T-cell (primary cell): ENCODE measurements at regions of chr19 and their contacts with region 1.

Region 1: DNA sequence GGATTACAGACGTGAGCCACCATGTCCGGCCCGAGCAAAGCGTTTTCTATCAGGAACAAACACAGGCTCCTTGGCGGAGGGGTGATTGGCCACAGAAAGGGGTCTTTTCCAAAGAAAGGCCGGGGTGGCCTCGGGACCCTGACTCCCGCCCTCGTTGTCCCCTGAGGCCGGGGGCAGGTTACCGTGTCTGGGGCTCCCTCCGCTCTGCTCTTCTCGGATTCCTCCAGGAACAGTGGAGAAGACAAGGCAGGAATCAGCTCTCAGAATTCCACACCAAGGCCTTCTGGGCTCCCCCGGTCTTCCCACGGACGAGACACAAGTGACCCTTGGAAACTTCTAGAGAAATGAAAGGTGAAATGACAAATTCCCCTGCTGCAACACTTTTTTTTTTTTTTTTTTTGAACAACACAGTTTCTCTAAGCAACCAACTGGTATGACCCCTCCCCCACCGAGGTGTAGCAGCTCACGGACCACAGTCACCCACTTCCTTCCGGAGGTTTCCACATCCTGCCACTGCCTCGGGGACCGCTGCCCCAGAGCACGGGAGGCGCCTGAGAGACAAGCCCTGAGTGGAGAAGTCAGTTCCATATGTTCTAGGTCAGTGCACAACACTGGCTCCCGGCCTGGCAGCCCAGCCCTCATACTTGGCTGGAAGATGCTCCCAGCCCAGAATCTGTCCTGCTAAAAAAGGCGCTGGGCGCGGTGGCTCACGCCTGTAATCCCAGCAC is 11.0 kb downstream of the MOB3A start:
- DNase-seq: peak; percentile 76 to 98 (median 94)
- ATAC-seq: peak; percentile 70 to 80 (median 76)
- H3K4me3 ChIP-seq: peak overlapping the region; percentile 92 to 99
- H3K4me3 Mint-ChIP-seq: peak overlapping the region; percentile 98 to 99 (median 99)
- H3K27ac ChIP-seq: peak overlapping the region; percentile 97
- H3K27ac Mint-ChIP-seq: peak overlapping the region; percentile 99
- H3K4me1 ChIP-seq: peaks cover 39 to 90% of the 10 kb centered on the region in 2 experiments
- H3K4me1 Mint-ChIP-seq: peaks cover 76 to 80% (median 76%) of the 10 kb centered on the region in 3 donors
- H3K27me3 ChIP-seq: no peaks in the 10 kb centered on the region
- H3K27me3 Mint-ChIP-seq: no peaks in the 10 kb centered on the region

Region 2: GRCh38 chr19:2070436-2070827 is 14.7 kb before region 1 on chr19:
- CTCF ChIA-PET with region 1: interaction called in 1 of 2 experiments, 4 read pairs
- POLR2A ChIA-PET with region 1: interaction called in 1 of 2 experiments, 12 read pairs
- DNase-seq: no peak
- ATAC-seq: peak in 1 of 4 experiments; percentile 4
- H3K4me3 ChIP-seq: no peak overlapping the region
- H3K4me3 Mint-ChIP-seq: no peak overlapping the region
- H3K27ac ChIP-seq: no peak overlapping the region
- H3K27ac Mint-ChIP-seq: peak overlapping the region in 1 of 2 donors; percentile 28
- H3K4me1 ChIP-seq: peaks cover 0 to 37% of the 10 kb centered on the region in 2 experiments
- H3K4me1 Mint-ChIP-seq: peaks cover 23 to 43% (median 33%) of the 10 kb centered on the region in 3 donors
- H3K27me3 ChIP-seq: no peaks in the 10 kb centered on the region
- H3K27me3 Mint-ChIP-seq: no peaks in the 10 kb centered on the region

Region 3: DNA sequence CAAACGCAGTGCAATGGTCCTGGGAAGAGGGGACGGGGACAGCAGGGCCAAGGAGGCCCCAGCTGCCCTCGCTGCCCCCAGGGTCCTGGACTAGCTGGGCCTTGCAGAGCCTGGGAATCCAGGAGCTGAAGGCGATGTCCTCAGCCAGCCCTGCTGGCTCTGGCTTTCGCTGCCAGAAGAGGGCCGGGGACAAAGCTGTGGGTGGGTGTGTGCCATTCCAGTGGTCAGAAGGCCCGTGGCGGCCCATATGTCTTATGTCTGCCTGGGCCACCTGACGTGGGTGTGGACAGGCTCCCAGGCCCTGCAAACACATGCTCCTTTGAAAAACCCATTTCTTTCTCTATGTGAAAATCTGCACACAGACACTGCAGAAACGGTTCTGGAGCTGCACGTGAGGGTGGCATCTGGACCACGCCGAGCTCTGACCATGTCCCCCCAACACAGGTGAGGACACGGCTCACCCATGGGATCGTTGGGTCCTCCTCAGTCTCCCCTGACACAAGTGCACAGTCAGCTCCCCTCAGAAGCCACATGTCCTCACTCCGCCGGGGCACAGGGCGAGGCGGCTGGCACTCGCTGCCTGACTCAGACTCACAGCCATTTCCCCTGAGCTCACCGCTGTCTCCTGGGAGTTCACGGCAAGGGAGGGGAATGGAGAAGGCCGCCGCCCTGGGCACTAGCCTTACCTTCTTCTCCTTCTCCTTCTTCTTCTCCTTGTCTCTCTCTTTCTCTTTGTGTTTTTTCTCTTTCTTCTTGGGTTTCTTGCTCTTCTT is 28.5 kb after region 1 on chr19:
- CTCF ChIA-PET with region 1: no interaction called
- POLR2A ChIA-PET with region 1: no interaction called
- DNase-seq: no peak
- ATAC-seq: no peak
- H3K4me3 ChIP-seq: no peak overlapping the region
- H3K4me3 Mint-ChIP-seq: no peak overlapping the region
- H3K27ac ChIP-seq: no peak overlapping the region
- H3K27ac Mint-ChIP-seq: no peak overlapping the region
- H3K4me1 ChIP-seq: peaks cover 0 to 17% of the 10 kb centered on the region in 2 experiments
- H3K4me1 Mint-ChIP-seq: peaks cover 0 to 7% (median 0%) of the 10 kb centered on the region in 3 donors
- H3K27me3 ChIP-seq: no peaks in the 10 kb centered on the region
- H3K27me3 Mint-ChIP-seq: no peaks in the 10 kb centered on the region